ENCODE measurements at regions of chr7 and their contacts with region 1.

Region 1: DNA sequence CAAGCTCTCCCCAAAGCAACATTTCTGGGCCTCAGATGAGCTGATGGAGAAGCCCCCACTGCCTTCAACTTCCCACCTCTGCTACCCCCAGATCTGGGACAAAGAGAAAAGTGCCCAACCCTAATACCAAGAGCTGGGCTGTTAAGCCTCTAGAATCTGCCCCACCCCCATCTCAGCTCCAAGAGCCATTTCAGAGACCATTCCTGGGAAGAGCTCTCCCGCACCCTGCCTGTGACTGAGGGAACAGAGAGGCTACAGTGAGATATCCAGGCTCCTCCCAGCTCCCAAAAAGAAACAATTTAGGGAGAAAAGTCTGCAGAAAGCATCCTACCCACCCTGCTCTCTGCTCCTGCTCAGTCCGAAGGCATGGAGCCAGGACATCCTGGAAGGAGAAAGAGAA is 2.5 kb upstream of the KCNH2 start:
- DNase-seq: no peak
- ATAC-seq: no peak
- H3K4me3 ChIP-seq: no peak overlapping the region
- H3K27ac ChIP-seq: no peak overlapping the region
- H3K4me1 ChIP-seq: no peaks in the 10 kb centered on the region
- H3K27me3 ChIP-seq: peaks cover 0 to 68% (median 13%) of the 10 kb centered on the region in 3 donors
- CTCF ChIP-seq: no peak

Region 2: DNA sequence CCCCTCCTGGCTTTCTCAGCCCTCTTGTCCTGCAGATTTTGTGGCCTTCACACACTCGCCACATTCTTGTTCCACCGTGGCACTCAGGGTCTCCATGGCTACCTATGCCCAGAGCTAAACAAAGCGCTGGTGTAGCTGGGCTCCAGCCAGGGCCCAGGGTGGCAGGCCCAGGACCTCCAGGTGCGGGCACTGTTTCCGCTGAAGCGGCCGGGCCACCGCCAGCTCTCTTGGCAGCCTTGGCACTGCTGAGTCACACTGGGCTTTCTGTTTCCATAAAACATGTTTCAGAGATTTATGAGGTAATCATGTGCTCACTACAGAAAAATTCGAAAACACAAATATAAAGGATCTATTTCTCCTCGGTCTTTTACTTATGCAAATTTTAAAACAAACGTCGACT is 77.1 kb before region 1 on chr7:
- intact Hi-C with region 1: loop called in 1 of 2 experiments (anchors 2 kb)
- DNase-seq: peak; percentile 36 to 47
- ATAC-seq: peak; percentile 30 to 53 (median 49)
- H3K4me3 ChIP-seq: no peak overlapping the region
- H3K27ac ChIP-seq: no peak overlapping the region
- H3K4me1 ChIP-seq: no peaks in the 10 kb centered on the region
- H3K27me3 ChIP-seq: peaks cover 0 to 60% (median 5%) of the 10 kb centered on the region in 3 donors
- CTCF ChIP-seq: no peak

Region 3: GRCh38 chr7:151244196-151244840 is 263.7 kb after region 1 on chr7:
- intact Hi-C with region 1: no loop called
- DNase-seq: peak in 1 of 2 donors; percentile 64
- ATAC-seq: no peak
- H3K4me3 ChIP-seq: peak overlapping the region; percentile 88
- H3K27ac ChIP-seq: peak overlapping the region; percentile 100
- H3K4me1 ChIP-seq: peaks cover 40% of the 10 kb centered on the region
- H3K27me3 ChIP-seq: no peaks in the 10 kb centered on the region
- CTCF ChIP-seq: peak; percentile 80

Measured in psoas muscle (tissue), 8 donors.